Left colon (tissue), 2 donors: ENCODE measurements at regions of chr22 and their contacts with region 1.

Region 1: DNA sequence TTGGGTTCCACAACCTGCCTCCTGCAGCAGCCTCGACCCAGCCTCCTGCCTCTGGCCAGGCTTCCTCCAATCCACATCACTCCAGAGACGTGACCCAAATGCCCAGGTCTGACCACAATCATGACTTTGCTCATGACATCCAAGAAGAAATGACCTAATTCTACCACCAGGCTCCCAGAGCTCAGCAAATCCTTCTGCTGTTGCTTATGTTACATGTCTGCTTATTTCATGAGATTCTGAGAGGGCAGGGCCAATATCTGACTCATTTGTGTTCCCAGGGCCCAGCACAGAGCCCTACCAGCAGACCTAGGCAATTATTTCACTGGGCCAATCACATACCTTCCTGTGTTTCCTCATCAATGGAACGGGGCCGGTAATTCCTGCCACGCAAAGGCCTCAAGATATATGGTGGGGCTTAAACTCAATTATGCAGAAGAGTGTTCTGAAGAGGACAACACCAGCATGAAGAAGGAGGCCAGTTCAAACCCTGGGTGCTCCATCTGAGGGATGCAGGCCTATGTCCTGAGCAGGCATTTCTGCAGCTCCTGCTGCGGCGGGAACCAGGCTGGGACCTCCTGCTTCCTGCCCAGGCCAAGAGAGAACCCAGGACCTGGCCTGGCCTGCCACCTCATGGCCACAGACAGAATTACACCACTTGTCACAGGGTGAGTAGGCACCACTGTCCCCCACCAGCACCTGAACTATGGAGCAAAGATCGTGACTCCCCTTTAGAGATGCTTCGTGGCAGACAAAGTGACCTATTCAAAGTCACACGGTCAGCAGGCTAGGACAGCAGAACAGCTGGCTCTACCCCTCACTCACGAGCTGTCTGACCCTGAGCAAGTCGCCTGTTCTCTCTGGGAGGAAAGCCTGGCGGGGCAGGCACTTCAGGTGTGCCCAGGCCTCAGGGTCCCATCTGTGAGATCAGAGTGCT is 5.9 kb downstream of the CENPM start:
- DNase-seq: peak; percentile 84 to 91
- ATAC-seq: peak; percentile 64

Region 2: DNA sequence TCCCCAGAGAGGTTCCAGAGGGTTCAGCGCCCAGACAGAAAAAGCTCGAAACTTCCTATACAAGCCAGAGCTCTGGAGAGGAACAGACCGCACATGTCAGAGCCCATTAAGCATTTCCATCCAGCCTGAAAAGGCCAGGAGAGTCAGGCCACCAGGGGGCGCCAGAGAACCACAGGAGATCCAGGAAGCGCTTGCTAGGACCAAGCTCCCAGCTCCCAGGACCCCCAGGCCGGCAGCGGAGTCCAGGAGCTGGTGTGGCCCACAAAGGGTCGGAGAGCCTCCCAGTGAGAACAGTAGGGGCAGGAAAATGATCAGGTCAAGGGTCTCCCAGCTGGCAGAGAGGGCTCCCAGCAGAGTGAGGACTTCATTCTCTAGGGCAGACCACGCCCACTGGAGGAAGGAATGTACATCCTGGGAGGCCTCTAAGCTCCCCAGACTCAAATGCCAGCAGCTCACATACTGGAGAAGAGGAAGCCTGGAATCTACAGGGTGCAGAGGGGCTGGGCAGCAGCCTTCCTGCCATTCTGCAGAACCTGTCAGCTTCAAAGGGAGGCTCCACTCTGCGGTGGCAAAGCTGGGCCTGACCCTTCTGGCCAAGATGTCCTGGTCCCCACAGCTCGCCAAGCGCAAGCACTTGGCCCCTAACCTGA is 243.8 kb before region 1 on chr22:
- intact Hi-C with region 1: loop called in 1 of 2 experiments (anchors 5 kb)
- DNase-seq: peak; percentile 85 to 99
- ATAC-seq: peak; percentile 85

Region 3: DNA sequence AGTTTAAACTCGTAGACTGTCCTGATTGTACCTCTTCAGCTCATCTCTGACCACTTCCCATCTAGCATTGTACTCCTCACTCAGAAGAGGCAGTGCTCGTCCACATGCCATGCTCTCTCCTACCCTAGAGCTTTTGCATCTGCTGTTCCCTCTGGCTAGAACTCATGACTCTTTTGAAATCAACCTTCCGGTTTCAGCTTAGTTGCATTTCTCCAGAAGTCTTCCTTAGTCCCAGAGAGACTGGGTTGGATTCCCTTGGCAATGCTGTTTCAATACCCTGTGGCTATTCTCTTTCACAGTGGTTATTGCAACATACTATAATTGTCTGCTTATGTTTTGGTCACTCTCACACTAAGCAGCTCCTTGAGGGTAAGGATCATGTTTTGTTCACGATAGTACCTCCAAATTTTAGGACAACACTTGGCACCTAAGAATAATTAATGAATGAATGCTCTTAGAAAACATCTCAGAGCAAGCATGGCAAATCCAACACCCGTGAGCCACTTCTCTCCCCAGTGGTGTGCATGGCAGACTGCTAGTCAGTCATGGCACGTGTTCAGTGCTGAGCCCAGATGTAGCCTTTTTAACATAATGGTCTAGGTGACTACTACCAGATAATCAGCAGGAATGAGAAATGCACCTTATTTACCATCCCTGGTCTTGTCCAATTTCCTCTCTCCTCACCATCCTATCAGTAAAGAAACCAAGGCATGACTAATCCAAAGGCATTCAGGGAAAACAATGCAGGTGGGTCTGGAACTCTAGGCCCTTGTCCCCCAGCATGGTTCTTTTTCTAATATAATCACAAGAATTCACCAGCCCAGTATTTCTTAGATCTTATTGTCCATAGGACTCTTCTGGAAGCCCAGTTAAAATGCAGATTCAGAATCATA is 42.7 kb after region 1 on chr22:
- intact Hi-C with region 1: no loop called
- DNase-seq: no peak
- ATAC-seq: no peak

Region 4: GRCh38 chr22:42188808-42189447 is 247.8 kb after region 1 on chr22:
- intact Hi-C with region 1: no loop called
- DNase-seq: no peak
- ATAC-seq: peak; percentile 95